HepG2 (cell line): ENCODE measurements at regions of chr16 and their contacts with region 1.

Region 1: DNA sequence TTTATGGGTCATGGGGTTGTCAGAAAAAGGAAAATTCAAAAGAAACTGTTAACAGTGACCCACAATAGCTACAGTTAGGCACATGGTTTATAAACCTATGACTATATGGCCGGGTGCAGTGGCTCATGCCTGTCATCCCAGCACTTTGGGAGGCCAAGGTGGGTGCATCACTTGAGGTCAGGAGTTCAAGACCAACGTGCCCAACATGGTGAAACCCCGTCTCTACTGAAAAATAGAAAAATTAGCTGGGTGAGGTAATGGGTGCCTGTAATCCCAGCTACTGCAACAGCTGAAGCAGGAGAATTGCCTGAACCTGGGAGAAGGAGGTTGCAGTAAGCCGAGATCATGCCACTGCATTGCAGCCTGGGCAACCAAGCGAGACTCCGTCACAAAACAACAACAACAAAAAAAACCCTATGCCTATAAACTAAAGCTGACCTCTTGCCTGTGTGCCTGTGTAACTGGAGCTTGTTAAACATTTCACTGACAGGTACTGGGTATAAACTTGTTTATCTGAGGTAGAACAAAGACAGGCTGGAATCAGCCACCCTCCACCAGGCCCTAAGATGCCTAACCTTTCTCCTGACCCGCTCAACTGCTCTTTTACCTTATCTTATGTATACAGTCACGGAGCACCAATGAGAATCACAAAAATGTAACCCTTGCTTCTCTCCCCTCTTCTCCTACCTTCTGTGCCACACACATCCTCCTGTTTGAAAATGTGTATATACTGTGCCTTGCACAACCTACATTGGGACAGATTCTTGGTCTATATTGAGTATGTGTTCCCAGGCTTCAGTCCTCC is 62.9 kb upstream of the ATF7IP2 start:
- DNase-seq: peak; percentile 95
- ATAC-seq: peak; percentile 79
- H3K4me3 ChIP-seq: peak overlapping the region; percentile 1 to 37 (median 25); a peak in 4 of 6 replicates
- H3K27ac ChIP-seq: peak overlapping the region; percentile 73
- H3K4me1 ChIP-seq: peaks cover 63% of the 10 kb centered on the region
- H3K27me3 ChIP-seq: no peaks in the 10 kb centered on the region
- CTCF ChIP-seq: no peak
- EP300 ChIP-seq: peak in 1 of 2 experiments; percentile 89; a peak in 2 of 4 replicates
- POLR2A ChIP-seq: no peak
- RAD21 ChIP-seq: no peak

Region 2: GRCh38 chr16:9797306-9797705 is 525.6 kb before region 1 on chr16:
- CTCF ChIA-PET with region 1: no interaction called
- POLR2A ChIA-PET with region 1: no interaction called
- in situ Hi-C with region 1: no loop called
- intact Hi-C with region 1: no loop called
- DNase-seq: peak; percentile 13
- ATAC-seq: no peak
- H3K4me3 ChIP-seq: no peak overlapping the region
- H3K27ac ChIP-seq: no peak overlapping the region
- H3K4me1 ChIP-seq: no peaks in the 10 kb centered on the region
- H3K27me3 ChIP-seq: peaks cover 2 to 9% of the 10 kb centered on the region in 2 experiments; a peak in 2 of 5 replicates
- CTCF ChIP-seq: no peak
- EP300 ChIP-seq: no peak
- POLR2A ChIP-seq: no peak
- RAD21 ChIP-seq: no peak

Region 3: GRCh38 chr16:10356870-10357842 is 34.2 kb after region 1 on chr16:
- CTCF ChIA-PET with region 1: no interaction called
- POLR2A ChIA-PET with region 1: no interaction called
- in situ Hi-C with region 1: no loop called
- intact Hi-C with region 1: loop called (anchors 2 kb)
- DNase-seq: peak; percentile 94
- ATAC-seq: peak; percentile 77
- H3K4me3 ChIP-seq: no peak overlapping the region; a peak in 1 of 6 replicates
- H3K27ac ChIP-seq: peak overlapping the region; percentile 63
- H3K4me1 ChIP-seq: peaks cover 64% of the 10 kb centered on the region
- H3K27me3 ChIP-seq: no peaks in the 10 kb centered on the region
- CTCF ChIP-seq: no peak
- EP300 ChIP-seq: peak in 1 of 2 experiments; percentile 87; a peak in 2 of 4 replicates
- POLR2A ChIP-seq: no peak
- RAD21 ChIP-seq: no peak